Activated naive CD8-positive, alpha-beta T cell treated with anti-CD3 and anti-CD28 coated beads, Interleukin-2, amount 10 ng/mL, durations not matched to agents 7 days and 5 days (primary cell): ENCODE measurements at regions of chr16 and their contacts with region 1.

Region 1: GRCh38 chr16:30458561-30459394 is 13.1 kb upstream of the SEPHS2 start:
- DNase-seq: peak; percentile 91
- ATAC-seq: peak; percentile 97
- H3K4me3 Mint-ChIP-seq: peak overlapping the region; percentile 76
- H3K27ac Mint-ChIP-seq: peak overlapping the region; percentile 96
- H3K4me1 Mint-ChIP-seq: peaks cover 61% of the 10 kb centered on the region
- H3K27me3 Mint-ChIP-seq: no peaks in the 10 kb centered on the region

Region 2: GRCh38 chr16:30445408-30446202 is 13.2 kb before region 1 on chr16 and contains the start of gene SEPHS2:
- POLR2A ChIA-PET with region 1: interaction called, 30 read pairs
- DNase-seq: peak; percentile 95
- ATAC-seq: peak; percentile 95
- H3K4me3 Mint-ChIP-seq: peak within 1 kb of the TSS; percentile 88
- H3K27ac Mint-ChIP-seq: peak within 1 kb of the TSS; percentile 90
- H3K4me1 Mint-ChIP-seq: peaks cover 39% of the 10 kb centered on the region
- H3K27me3 Mint-ChIP-seq: no peaks in the 10 kb centered on the region
- total RNA-seq, gene SEPHS2: 59.4 to 59.8 TPM

Region 3: GRCh38 chr16:30472328-30472942 is 13.7 kb after region 1 on chr16 and contains the start of gene ITGAL:
- POLR2A ChIA-PET with region 1: interaction called, 259 read pairs
- DNase-seq: peak; percentile 72
- ATAC-seq: peak; percentile 82
- H3K4me3 Mint-ChIP-seq: peak within 1 kb of the TSS; percentile 100
- H3K27ac Mint-ChIP-seq: peak within 1 kb of the TSS; percentile 92
- H3K4me1 Mint-ChIP-seq: peaks cover 47% of the 10 kb centered on the region
- H3K27me3 Mint-ChIP-seq: no peaks in the 10 kb centered on the region
- total RNA-seq, gene ITGAL: 662 to 664 TPM

Region 4: GRCh38 chr16:30482366-30482765 is 23.6 kb after region 1 on chr16:
- POLR2A ChIA-PET with region 1: interaction called, 41 read pairs
- DNase-seq: no peak
- ATAC-seq: peak; percentile 39
- H3K4me3 Mint-ChIP-seq: peak overlapping the region; percentile 39
- H3K27ac Mint-ChIP-seq: peak overlapping the region; percentile 84
- H3K4me1 Mint-ChIP-seq: peaks cover 39% of the 10 kb centered on the region
- H3K27me3 Mint-ChIP-seq: no peaks in the 10 kb centered on the region

Region 5: GRCh38 chr16:30557957-30558788 is 99.4 kb after region 1 on chr16 and contains the start of gene ZNF764:
- POLR2A ChIA-PET with region 1: interaction called, 10 read pairs
- DNase-seq: peak; percentile 94
- ATAC-seq: peak; percentile 97
- H3K4me3 Mint-ChIP-seq: peak within 1 kb of the TSS; percentile 90
- H3K27ac Mint-ChIP-seq: peak within 1 kb of the TSS; percentile 91
- H3K4me1 Mint-ChIP-seq: peaks cover 34% of the 10 kb centered on the region
- H3K27me3 Mint-ChIP-seq: no peaks in the 10 kb centered on the region
- total RNA-seq, gene ZNF764: 20.9 to 23.3 TPM

Region 6: GRCh38 chr16:30615358-30616091 is 156.7 kb after region 1 on chr16:
- POLR2A ChIA-PET with region 1: no interaction called
- DNase-seq: peak; percentile 82
- ATAC-seq: peak; percentile 79
- H3K4me3 Mint-ChIP-seq: no peak overlapping the region
- H3K27ac Mint-ChIP-seq: no peak overlapping the region
- H3K4me1 Mint-ChIP-seq: peaks cover 11% of the 10 kb centered on the region
- H3K27me3 Mint-ChIP-seq: peaks cover 9% of the 10 kb centered on the region